Mammary epithelial cell (primary cell): ENCODE measurements at regions of chr5 and their contacts with region 1.

Region 1: DNA sequence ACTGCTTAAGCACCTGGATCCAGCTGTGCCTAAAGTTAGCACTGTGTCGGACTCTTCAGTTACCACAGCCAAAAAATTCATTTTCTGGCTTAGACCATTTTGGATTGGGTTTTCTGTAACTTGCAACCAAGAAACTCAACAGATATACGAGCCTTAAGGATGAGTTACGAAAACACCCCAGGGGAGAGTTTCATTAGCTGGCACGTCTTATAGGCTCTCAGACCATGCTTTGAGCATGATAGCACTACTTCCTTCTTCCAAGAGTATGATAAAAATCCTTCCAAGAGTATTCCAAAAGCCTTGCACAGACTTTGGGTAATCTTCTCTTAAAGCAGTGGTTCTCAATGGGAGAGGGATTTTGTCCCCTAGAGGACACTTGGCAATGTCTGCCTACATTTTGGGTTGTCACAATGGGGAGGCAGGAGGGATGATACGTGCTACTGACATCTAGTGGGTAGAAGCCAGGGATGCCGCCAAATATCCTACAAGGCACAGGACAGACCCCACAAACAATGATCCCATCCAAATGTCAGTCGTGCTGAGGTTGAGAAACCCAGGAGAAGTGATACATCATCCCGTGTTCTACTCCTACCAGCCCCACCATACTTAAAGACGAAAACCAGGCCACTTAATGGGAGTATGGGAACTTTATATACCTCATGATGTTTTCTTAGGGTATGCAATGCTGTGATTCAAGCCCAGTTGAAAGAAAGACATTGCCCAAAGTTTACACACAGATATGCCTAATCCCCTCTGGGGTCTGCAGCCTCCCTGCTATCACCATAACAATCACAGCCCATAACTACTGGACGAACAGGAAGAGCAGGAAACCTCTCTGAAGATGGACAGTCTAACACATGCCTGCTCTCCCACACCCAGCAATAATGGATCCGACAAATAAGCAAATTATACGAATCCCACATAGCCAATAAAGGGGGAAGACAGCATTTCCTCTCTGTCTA is 65.0 kb downstream of the SMIM23 start:
- DNase-seq: no peak
- H3K4me3 ChIP-seq: no peak overlapping the region
- H3K27ac ChIP-seq: no peak overlapping the region
- H3K4me1 ChIP-seq: peaks cover 9% of the 10 kb centered on the region
- H3K27me3 ChIP-seq: no peaks in the 10 kb centered on the region
- CTCF ChIP-seq: peak; percentile 24 to 50

Region 2: GRCh38 chr5:171418316-171418981 is 432.2 kb before region 1 on chr5:
- CTCF ChIA-PET with region 1: no interaction called
- dilution Hi-C with region 1: no loop called
- in situ Hi-C with region 1: loop called in 1 of 2 experiments (anchors 10 kb)
- intact Hi-C with region 1: loop called (anchors 2 kb)
- DNase-seq: peak; percentile 70
- H3K4me3 ChIP-seq: peak overlapping the region in 1 of 3 experiments; percentile 31
- H3K27ac ChIP-seq: no peak overlapping the region
- H3K4me1 ChIP-seq: peaks cover 15% of the 10 kb centered on the region
- H3K27me3 ChIP-seq: peaks cover 8% of the 10 kb centered on the region
- CTCF ChIP-seq: peak; percentile 77 to 89

Region 3: GRCh38 chr5:171484460-171484899 is 366.1 kb before region 1 on chr5:
- CTCF ChIA-PET with region 1: no interaction called
- dilution Hi-C with region 1: no loop called
- in situ Hi-C with region 1: no loop called
- intact Hi-C with region 1: loop called (anchors 1 kb)
- DNase-seq: no peak
- H3K4me3 ChIP-seq: no peak overlapping the region
- H3K27ac ChIP-seq: no peak overlapping the region
- H3K4me1 ChIP-seq: no peaks in the 10 kb centered on the region
- H3K27me3 ChIP-seq: no peaks in the 10 kb centered on the region
- CTCF ChIP-seq: peak; percentile 60 to 70

Region 4: GRCh38 chr5:171606414-171607024 is 244.1 kb before region 1 on chr5:
- CTCF ChIA-PET with region 1: no interaction called
- dilution Hi-C with region 1: no loop called
- in situ Hi-C with region 1: no loop called
- intact Hi-C with region 1: no loop called
- DNase-seq: no peak
- H3K4me3 ChIP-seq: no peak overlapping the region
- H3K27ac ChIP-seq: no peak overlapping the region
- H3K4me1 ChIP-seq: no peaks in the 10 kb centered on the region
- H3K27me3 ChIP-seq: peaks cover 1% of the 10 kb centered on the region
- CTCF ChIP-seq: peak; percentile 53 to 62

Region 5: GRCh38 chr5:171724468-171725204 is 126.0 kb before region 1 on chr5:
- CTCF ChIA-PET with region 1: no interaction called
- dilution Hi-C with region 1: loop called (anchors 5 kb)
- in situ Hi-C with region 1: no loop called
- intact Hi-C with region 1: no loop called
- DNase-seq: no peak
- H3K4me3 ChIP-seq: no peak overlapping the region
- H3K27ac ChIP-seq: no peak overlapping the region
- H3K4me1 ChIP-seq: no peaks in the 10 kb centered on the region
- H3K27me3 ChIP-seq: peaks cover 4% of the 10 kb centered on the region
- CTCF ChIP-seq: no peak

Region 6: DNA sequence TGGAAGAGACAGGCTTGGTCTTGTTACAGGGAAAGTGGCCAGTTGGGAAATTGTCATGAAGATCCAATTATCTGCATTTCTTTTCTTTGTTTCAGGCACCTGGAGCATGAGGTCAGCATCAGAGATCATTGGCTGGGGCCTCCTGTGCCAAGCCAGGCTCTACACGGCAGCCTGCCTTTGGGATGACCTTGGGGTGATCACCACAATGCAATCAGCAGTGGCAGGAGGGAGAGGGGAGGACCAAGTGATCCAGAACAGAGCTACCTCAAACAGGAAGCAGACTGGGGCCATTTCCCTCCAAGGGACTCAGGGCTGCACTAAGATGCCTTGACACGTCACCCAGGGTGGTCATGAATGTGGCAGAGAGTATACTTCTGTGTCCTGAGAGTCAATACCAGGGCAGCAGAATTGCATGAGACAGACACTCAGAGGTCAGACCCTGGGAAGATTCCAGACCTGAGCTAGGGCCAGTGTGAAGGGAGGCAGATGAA is 56.1 kb before region 1 on chr5:
- CTCF ChIA-PET with region 1: no interaction called
- dilution Hi-C with region 1: loop called (anchors 5 kb)
- in situ Hi-C with region 1: no loop called
- intact Hi-C with region 1: no loop called
- DNase-seq: no peak
- H3K4me3 ChIP-seq: no peak overlapping the region
- H3K27ac ChIP-seq: no peak overlapping the region
- H3K4me1 ChIP-seq: no peaks in the 10 kb centered on the region
- H3K27me3 ChIP-seq: no peaks in the 10 kb centered on the region
- CTCF ChIP-seq: no peak